ENCODE measurements at regions of chr11 and their contacts with region 1.

Region 1: DNA sequence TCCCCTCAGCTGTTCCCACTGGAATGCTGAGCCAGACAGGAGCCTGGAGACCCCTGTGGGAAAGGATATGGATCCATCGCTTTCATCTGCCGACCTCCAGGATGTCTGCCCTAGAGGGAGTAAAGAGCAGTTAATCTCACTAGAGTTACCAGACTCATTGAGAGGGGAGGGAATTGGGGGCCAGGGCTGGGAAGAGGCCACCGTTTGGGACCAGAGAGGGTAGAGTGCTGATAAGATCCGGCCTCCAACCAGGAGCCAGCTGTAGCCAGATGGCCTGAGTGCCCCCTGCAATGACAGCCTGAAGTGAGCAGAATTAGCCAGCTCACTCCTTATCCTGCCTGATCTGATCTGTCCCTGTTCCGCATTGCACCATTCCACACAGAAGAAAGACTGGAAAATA is 3.7 kb upstream of the APLNR start:
- DNase-seq: no peak
- ATAC-seq: peak; percentile 21

Region 2: DNA sequence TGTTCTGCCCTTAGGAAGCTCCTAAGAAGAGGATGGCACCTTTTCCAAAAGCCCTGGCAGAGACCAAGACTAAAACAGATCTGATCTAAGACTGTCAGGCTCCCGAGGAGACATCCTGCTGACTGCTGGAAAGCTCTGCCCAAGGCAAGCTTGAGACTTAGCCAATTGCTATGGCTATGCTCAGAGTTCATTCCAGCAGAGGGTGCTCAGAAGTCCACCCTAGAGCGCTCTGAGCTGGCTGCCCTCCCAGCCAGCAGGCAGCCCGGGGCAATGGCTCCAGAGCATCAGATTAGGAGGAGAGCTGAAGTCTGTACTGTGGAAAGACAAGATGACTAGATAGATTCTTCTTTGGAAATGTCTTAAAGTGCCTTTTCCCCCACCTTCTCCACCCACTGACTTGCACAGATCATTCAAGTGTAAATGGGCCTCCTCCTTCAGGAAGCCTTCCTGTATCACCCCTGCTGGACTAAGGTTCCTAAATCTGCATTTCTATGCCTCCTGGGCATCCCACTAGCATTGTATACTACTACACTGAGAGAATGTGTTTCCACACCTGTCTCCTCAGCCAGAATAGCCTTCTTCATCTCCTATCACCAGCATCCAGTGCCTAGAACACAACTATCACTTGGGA is 35.6 kb before region 1 on chr11:
- intact Hi-C with region 1: loop called (anchors 5 kb)
- DNase-seq: peak; percentile 61
- ATAC-seq: no peak

Measured in Right ventricle myocardium superior (tissue), 1 donor.